IMR-90 (cell line): ENCODE measurements at regions of chr1 and their contacts with region 1.

Region 1: DNA sequence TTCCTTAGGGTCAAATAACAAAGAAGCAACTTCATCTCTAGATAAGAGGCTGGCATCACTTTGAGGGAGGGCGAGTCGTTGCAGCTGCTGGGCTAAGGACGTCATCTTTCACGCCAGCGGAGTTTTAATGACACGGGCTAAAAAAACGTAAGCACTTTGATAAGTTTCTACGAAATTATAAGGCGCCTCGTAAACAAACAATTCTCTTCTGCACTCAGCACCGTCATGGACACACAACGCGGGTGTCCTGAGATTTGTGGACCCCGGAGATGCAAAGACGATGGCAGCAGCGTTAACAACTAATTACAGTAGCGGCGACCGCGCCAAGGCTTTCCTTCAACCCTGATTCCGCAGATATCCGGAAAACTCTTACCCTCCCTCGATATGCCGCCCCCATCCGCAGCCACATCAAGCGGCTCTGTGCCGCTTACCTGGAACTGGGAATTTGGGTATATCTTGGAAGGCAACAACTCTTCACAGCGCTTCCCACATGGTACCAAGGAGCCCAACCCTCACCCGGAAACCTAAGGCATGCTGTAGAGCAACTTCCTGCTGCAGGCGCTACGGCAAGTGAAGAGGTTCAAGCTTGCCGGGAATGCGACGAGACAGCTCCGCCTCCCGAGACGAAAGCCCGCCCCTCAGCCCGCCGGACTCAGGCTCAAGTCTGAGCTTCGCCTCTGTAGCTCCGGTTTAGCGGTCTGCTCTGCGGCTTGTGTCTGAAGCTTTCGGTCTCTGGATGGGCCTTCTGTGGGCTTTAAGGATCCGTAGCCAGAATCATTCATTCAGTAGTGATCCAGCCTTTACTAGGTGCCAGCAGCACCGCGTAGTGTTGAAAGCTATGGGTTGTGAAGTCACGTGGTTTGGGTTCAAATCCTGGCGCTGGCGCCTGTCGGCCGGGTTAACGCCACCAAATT is at the start of gene HEATR1:
- DNase-seq: peak; percentile 96
- ATAC-seq: peak; percentile 99
- H3K4me3 ChIP-seq: peak within 1 kb of the TSS; percentile 79
- H3K27ac ChIP-seq: peak within 1 kb of the TSS; percentile 80
- H3K4me1 ChIP-seq: no peaks in the 10 kb centered on the region
- H3K27me3 ChIP-seq: no peaks in the 10 kb centered on the region
- CTCF ChIP-seq: no peak
- POLR2A ChIP-seq: peak; percentile 53; the same call in 1 of the 2 replicates
- RAD21 ChIP-seq: no peak
- total RNA-seq, gene HEATR1: 53.8 and 61.1 TPM in 2 replicates

Region 2: DNA sequence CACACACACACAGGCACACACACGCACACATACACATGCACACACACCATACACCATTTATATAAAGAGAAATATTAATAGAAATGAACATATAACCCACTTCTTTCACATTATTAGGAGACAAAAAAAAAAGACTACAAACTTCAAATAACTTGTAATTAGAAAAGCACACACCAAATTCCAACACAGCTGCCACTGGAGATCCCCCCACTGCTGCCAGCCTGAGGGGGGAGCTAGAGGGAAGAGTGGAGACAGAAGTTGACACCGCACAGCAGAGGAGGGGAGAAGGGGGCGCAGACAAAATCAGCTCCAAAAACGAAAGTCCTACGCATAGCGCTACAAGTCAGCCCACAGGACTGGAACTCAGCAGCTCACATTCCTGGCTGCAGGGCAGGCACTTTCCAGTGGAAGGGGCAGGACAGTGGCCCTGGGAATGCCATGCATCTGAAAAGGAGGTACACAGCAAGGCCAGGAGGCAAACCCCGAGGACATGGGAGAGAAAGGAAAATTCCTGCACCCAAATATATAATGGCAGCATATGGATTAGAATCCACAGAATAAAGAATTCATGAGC is 43.9 kb before region 1 on chr1:
- CTCF ChIA-PET with region 1: interaction called, 3 read pairs
- POLR2A ChIA-PET with region 1: no interaction called
- dilution Hi-C with region 1: no loop called
- in situ Hi-C with region 1: no loop called
- intact Hi-C with region 1: loop called (anchors 5 kb)
- DNase-seq: no peak
- ATAC-seq: no peak
- H3K4me3 ChIP-seq: no peak overlapping the region
- H3K27ac ChIP-seq: no peak overlapping the region
- H3K4me1 ChIP-seq: no peaks in the 10 kb centered on the region
- H3K27me3 ChIP-seq: no peaks in the 10 kb centered on the region
- CTCF ChIP-seq: no peak
- POLR2A ChIP-seq: no peak
- RAD21 ChIP-seq: no peak

Region 3: DNA sequence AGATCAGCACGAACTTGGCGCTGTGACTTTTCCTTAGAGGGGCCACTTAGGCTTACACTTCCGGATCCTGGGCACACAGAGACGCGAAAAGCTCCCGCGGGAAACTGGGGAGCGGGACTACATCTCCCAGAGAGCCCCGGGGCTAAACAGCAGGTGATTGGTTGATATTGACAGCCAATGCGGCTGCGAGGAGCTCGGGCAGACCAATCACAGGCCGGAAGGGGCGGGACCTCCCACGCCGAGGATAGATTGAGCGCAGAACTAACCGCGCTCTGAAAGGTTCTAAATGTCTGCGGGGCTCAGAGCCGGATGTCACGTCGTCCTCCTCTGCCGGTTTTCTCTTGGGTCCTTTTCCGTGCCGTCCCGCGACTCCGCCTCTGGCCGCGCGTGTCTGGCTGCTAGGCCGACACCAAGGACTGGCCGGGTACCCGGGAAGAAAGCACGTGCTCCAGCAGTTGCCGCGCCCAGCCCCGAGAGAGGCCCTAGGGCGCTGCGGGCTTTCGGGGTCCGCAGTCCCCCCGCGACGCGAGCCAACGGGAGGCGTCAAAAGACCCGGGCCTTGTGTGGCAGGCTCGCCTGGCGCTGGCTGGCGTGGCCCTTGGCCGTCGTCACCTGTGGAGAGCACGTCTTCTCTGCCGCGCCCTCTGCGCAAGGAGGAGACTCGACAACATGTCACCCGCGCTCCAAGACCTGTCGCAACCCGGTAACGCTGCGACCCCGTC is 190.9 kb after region 1 on chr1 and contains the start of gene MTR:
- CTCF ChIA-PET with region 1: no interaction called
- POLR2A ChIA-PET with region 1: no interaction called
- dilution Hi-C with region 1: no loop called
- in situ Hi-C with region 1: no loop called
- intact Hi-C with region 1: loop called (anchors 10 kb)
- DNase-seq: peak; percentile 95
- ATAC-seq: peak; percentile 100
- H3K4me3 ChIP-seq: peak within 1 kb of the TSS; percentile 61
- H3K27ac ChIP-seq: peak within 1 kb of the TSS; percentile 65
- H3K4me1 ChIP-seq: no peaks in the 10 kb centered on the region
- H3K27me3 ChIP-seq: no peaks in the 10 kb centered on the region
- CTCF ChIP-seq: no peak
- POLR2A ChIP-seq: peak; percentile 90
- RAD21 ChIP-seq: no peak
- total RNA-seq, gene MTR: 31.0 and 32.8 TPM in 2 replicates

Region 4: DNA sequence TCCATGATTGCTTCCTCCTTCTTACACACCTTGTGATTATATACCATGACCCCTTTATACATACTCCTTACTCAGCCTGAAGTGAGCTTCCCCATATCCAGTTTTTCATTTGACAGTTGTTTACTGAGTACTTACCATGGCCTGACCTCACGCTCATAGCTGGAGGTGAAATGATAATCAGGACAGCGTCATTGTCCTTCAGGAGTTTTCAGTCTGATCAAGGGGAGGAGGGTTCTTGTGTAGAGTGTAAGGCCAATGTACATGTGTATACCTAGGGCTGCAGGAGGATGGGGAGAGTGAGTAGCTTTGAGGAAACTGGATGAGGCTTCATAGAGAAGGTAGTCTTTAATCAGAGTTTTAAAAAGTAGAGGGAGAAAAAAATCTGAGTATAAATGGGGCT is 763.5 kb after region 1 on chr1:
- CTCF ChIA-PET with region 1: no interaction called
- POLR2A ChIA-PET with region 1: interaction called, 19 read pairs
- dilution Hi-C with region 1: no loop called
- in situ Hi-C with region 1: no loop called
- intact Hi-C with region 1: no loop called
- DNase-seq: no peak
- ATAC-seq: no peak
- H3K4me3 ChIP-seq: no peak overlapping the region
- H3K27ac ChIP-seq: no peak overlapping the region
- H3K4me1 ChIP-seq: no peaks in the 10 kb centered on the region
- H3K27me3 ChIP-seq: no peaks in the 10 kb centered on the region
- CTCF ChIP-seq: no peak
- POLR2A ChIP-seq: no peak
- RAD21 ChIP-seq: no peak